ENCODE measurements at regions of chr13 and their contacts with region 1.

Region 1: GRCh38 chr13:27919934-27920676 is at the start of gene PDX1:
- DNase-seq: no peak
- ATAC-seq: no peak
- H3K4me3 ChIP-seq: no peak within 1 kb of the TSS
- H3K27ac ChIP-seq: no peak within 1 kb of the TSS
- H3K4me1 ChIP-seq: no peaks in the 10 kb centered on the region
- H3K27me3 ChIP-seq: peaks cover 20 to 44% of the 10 kb centered on the region in 2 experiments
- CTCF ChIP-seq: no peak
- EP300 ChIP-seq: no peak
- POLR2A ChIP-seq: no peak
- RAD21 ChIP-seq: no peak
- polyA plus RNA-seq, gene PDX1: 0.02 TPM in 1 of 2 experiments, not detected in the other

Region 2: GRCh38 chr13:27868641-27869435 is 51.3 kb before region 1 on chr13:
- CTCF ChIA-PET with region 1: interaction called, 16 read pairs
- POLR2A ChIA-PET with region 1: no interaction called
- RAD21 ChIA-PET with region 1: interaction called, 3 read pairs
- SMC1A ChIA-PET with region 1: interaction called, 3 read pairs
- in situ Hi-C with region 1: no loop called
- intact Hi-C with region 1: no loop called
- DNase-seq: no peak
- ATAC-seq: peak; percentile 19; the same call in 1 of the 3 replicates
- H3K4me3 ChIP-seq: no peak overlapping the region
- H3K27ac ChIP-seq: no peak overlapping the region
- H3K4me1 ChIP-seq: no peaks in the 10 kb centered on the region
- H3K27me3 ChIP-seq: no peaks in the 10 kb centered on the region; a peak in 1 of 4 replicates
- CTCF ChIP-seq: peak; percentile 43 to 55 (median 48); a peak in 5 of 6 replicates
- EP300 ChIP-seq: no peak
- POLR2A ChIP-seq: no peak
- RAD21 ChIP-seq: peak; percentile 50